CD4-positive, alpha-beta memory T cell (primary cell): ENCODE measurements at regions of chr4 and their contacts with region 1.

Region 1: DNA sequence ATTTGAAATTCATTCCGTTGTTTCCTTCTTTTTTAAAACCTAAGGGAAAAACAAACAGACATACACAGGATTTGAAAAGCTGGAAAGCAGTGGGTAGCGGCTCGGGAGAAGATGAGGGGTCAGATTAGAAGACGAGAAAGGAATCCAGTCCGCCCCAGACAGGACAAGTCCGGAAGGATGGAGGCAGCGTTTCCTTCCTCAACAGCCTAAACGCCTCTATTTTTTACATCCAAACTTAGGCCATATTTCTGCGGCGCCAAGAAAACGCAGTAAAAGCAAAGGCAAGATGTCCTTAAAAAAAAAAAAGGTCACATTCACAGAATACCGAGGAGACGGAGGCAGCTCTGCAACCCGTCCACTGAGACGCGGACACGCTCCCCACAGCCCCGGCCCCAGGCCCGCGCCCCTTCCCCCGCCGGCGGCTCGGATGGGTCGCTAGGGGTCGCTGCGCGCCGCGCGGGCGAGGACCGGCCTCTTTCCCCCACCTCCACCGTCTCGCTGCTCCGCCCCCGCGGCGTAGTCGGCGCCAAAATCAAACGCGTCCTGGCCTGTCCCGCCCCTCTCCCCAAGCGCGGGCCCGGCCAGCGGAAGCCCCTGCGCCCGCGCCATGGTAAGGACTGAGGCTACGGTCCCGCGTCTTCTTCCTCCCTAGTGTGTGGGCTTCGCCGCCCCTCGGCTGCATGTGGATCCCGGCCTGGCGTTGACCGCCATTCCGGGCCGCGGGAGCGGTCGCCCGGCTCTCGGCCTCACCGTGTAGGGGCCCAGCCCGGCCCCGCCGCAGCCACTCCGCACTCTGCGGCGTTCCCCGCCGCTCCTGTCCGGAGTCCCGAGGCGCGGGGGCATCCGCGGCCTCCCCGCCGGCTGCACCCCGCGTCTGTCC is at the start of gene MND1:
- DNase-seq: peak; percentile 87 to 89 (median 88)
- H3K4me3 ChIP-seq: peak within 1 kb of the TSS; percentile 86
- H3K4me3 Mint-ChIP-seq: peak within 1 kb of the TSS; percentile 90 to 98 (median 93)
- H3K27ac ChIP-seq: peak within 1 kb of the TSS; percentile 54
- H3K27ac Mint-ChIP-seq: peak within 1 kb of the TSS in 6 of 7 donors; percentile 7 to 86 (median 73)
- H3K4me1 ChIP-seq: peaks cover 11% of the 10 kb centered on the region
- H3K4me1 Mint-ChIP-seq: peaks cover 7 to 25% (median 18%) of the 10 kb centered on the region in 4 donors
- H3K27me3 ChIP-seq: no peaks in the 10 kb centered on the region
- H3K27me3 Mint-ChIP-seq: no peaks in the 10 kb centered on the region
- total RNA-seq, gene MND1: not detected

Region 2: DNA sequence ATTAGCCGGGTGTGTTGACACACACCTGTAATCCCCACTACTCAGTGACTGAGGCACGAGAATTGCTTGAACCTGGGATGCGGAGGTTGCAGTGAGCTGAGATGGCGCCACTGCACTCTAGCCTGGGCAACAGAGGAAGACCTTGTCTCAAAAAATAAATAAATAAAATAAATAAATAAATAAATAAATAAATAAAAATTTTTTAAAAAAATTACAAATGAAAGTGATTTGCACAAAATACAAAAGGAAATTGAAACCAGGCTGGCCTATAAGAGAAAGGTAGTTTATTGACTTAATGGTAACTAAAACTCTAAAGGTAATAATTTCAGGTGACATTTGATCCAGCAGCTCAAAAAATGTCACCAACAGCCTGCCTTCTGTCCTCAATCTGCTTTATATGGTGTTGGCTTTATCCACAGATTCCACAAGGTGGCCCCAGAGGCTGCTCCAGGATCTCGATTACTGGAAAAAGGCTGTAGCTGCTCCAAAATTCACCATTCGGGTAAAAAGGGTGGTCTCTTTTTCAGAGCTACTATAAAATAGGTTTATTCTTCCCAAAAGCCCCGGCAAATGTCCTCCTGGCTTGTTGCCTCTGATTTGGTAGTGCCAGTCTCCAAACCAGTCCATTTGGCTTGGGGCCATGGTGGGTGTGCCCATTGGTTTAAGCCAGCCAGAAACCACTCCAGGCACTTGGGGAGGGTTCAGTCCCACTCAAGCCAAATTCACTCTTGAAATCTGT is 201.5 kb before region 1 on chr4:
- CTCF ChIA-PET with region 1: interaction called, 8 read pairs
- POLR2A ChIA-PET with region 1: no interaction called
- intact Hi-C with region 1: loop called (anchors 1 kb)
- DNase-seq: peak; percentile 63 to 68 (median 64)
- H3K4me3 ChIP-seq: no peak overlapping the region
- H3K4me3 Mint-ChIP-seq: no peak overlapping the region
- H3K27ac ChIP-seq: no peak overlapping the region
- H3K27ac Mint-ChIP-seq: no peak overlapping the region
- H3K4me1 ChIP-seq: peaks cover 4% of the 10 kb centered on the region
- H3K4me1 Mint-ChIP-seq: peaks cover 0 to 12% (median 5%) of the 10 kb centered on the region in 4 donors
- H3K27me3 ChIP-seq: no peaks in the 10 kb centered on the region
- H3K27me3 Mint-ChIP-seq: no peaks in the 10 kb centered on the region

Region 3: DNA sequence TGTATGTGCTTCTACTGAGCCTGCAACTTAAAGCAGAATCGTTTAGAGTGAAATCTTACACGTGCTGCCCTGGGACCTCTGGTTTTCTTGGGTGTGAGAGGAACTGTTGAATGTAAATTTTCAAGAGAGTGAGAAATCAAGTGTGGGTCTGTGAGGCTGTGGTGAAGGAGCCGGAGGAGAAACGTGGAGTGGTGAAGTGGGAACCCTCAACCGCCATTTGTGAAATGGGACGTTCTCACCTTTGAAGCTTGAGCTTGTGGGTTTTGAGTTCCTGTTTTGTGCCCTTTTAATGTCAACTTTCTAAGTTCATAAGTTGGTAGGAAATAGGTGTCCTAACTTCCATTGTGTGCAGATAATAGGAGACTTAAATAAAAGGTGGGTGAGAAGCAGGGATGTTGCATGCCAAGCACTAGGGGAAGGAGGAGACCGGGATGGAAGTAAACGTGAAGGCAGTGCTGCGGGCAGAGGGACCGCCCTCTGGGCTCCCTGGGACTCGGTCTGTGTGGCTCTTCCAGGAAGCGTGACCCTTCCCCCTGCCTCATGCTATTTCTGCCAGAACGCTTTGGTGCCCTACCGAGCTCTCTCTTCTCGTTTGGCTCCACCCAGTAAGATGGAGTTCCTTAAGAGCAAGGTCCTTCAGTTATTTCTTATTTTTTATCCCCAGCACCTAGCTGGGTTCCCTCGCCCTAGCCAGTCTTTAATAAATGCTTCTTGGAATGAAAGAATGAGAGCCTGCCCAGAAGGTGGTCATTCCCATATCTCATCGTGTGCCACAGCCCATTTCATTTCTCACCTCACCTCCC is 177.8 kb after region 1 on chr4:
- CTCF ChIA-PET with region 1: interaction called, 3 read pairs
- POLR2A ChIA-PET with region 1: no interaction called
- intact Hi-C with region 1: loop called (anchors 2 kb)
- DNase-seq: peak; percentile 74 to 78 (median 75)
- H3K4me3 ChIP-seq: peak overlapping the region in 1 of 2 donors; percentile 41
- H3K4me3 Mint-ChIP-seq: peak overlapping the region; percentile 73 to 87 (median 84)
- H3K27ac ChIP-seq: peak overlapping the region; percentile 67
- H3K27ac Mint-ChIP-seq: peak overlapping the region; percentile 69 to 96 (median 92)
- H3K4me1 ChIP-seq: peaks cover 98% of the 10 kb centered on the region
- H3K4me1 Mint-ChIP-seq: peaks cover 78 to 97% (median 89%) of the 10 kb centered on the region in 4 donors
- H3K27me3 ChIP-seq: no peaks in the 10 kb centered on the region
- H3K27me3 Mint-ChIP-seq: no peaks in the 10 kb centered on the region

Region 4: DNA sequence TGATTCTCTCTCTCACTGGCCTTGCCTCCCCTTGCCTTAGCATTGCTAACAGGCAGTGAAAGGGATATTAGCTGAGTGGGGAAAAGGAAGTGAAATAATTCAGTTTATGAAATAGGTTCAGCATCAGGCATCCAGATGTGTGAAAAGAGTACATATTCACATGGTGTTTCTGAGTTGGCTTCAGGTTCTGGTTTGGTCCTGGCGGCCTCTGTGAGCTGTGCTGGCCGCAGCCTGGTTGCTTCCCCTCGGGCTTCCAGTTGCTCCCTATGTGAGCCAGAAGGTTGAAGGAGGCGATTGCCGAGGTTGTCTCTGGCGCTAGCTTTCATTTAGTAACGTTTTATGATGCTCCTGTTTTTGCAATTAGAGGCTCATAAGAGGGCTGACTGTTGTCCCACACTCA is 240.7 kb after region 1 on chr4:
- CTCF ChIA-PET with region 1: interaction called, 18 read pairs
- POLR2A ChIA-PET with region 1: interaction called, 3 read pairs
- intact Hi-C with region 1: no loop called
- DNase-seq: no peak
- H3K4me3 ChIP-seq: no peak overlapping the region
- H3K4me3 Mint-ChIP-seq: no peak overlapping the region
- H3K27ac ChIP-seq: no peak overlapping the region
- H3K27ac Mint-ChIP-seq: peak overlapping the region in 4 of 7 donors; percentile 18 to 90 (median 40)
- H3K4me1 ChIP-seq: no peaks in the 10 kb centered on the region
- H3K4me1 Mint-ChIP-seq: peaks cover 5 to 16% (median 12%) of the 10 kb centered on the region in 4 donors
- H3K27me3 ChIP-seq: no peaks in the 10 kb centered on the region
- H3K27me3 Mint-ChIP-seq: no peaks in the 10 kb centered on the region

Region 5: GRCh38 chr4:153643406-153644383 is 299.3 kb after region 1 on chr4:
- CTCF ChIA-PET with region 1: interaction called, 32 read pairs
- POLR2A ChIA-PET with region 1: interaction called, 5 read pairs
- intact Hi-C with region 1: loop called (anchors 1 kb)
- DNase-seq: peak in 4 of 5 donors; percentile 54 to 65 (median 62)
- H3K4me3 ChIP-seq: no peak overlapping the region
- H3K4me3 Mint-ChIP-seq: peak overlapping the region in 3 of 8 donors; percentile 8 to 62 (median 35)
- H3K27ac ChIP-seq: no peak overlapping the region
- H3K27ac Mint-ChIP-seq: peak overlapping the region in 3 of 7 donors; percentile 19 to 93 (median 46)
- H3K4me1 ChIP-seq: peaks cover 6% of the 10 kb centered on the region
- H3K4me1 Mint-ChIP-seq: peaks cover 7 to 15% (median 10%) of the 10 kb centered on the region in 4 donors
- H3K27me3 ChIP-seq: no peaks in the 10 kb centered on the region
- H3K27me3 Mint-ChIP-seq: no peaks in the 10 kb centered on the region

Region 6: DNA sequence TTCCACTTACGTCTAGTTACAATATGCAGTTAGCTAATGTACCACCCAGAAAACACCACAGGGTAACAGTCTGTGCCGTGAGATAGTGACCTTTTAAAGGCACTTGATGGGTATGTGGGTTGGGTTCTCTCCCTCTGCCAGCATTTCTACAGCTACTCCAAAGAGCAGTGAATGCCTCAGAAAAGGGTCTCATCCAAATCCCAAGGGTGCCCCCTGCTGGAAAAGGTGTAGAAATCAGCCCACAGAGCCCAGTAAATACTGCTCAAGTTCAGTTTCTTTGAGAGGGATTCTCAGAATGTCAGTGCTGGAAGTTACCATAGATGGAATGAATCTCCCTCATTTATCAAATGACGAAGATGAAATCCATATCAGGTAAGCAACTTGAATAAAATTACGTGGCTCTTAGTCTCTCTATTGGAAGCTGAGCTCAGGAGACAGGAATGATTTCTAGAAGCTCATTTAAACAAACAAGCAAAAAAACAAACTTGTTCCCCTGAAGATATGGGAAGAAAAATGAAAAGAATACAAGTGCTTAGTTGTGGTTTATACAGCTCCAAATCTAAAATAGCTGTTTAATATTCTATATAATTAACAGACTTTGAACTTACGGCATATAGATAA is 405.9 kb after region 1 on chr4:
- CTCF ChIA-PET with region 1: interaction called, 5 read pairs
- POLR2A ChIA-PET with region 1: no interaction called
- intact Hi-C with region 1: loop called (anchors 1 kb)
- DNase-seq: peak; percentile 54 to 63 (median 58)
- H3K4me3 ChIP-seq: no peak overlapping the region
- H3K4me3 Mint-ChIP-seq: no peak overlapping the region
- H3K27ac ChIP-seq: no peak overlapping the region
- H3K27ac Mint-ChIP-seq: no peak overlapping the region
- H3K4me1 ChIP-seq: peaks cover 3% of the 10 kb centered on the region
- H3K4me1 Mint-ChIP-seq: peaks cover 0 to 9% (median 2%) of the 10 kb centered on the region in 4 donors
- H3K27me3 ChIP-seq: no peaks in the 10 kb centered on the region
- H3K27me3 Mint-ChIP-seq: peaks cover 0 to 2% of the 10 kb centered on the region in 2 donors

Region 7: GRCh38 chr4:154626793-154627484 is 1282.6 kb after region 1 on chr4:
- CTCF ChIA-PET with region 1: no interaction called
- POLR2A ChIA-PET with region 1: no interaction called
- intact Hi-C with region 1: loop called (anchors 10 kb)
- DNase-seq: peak in 2 of 5 donors; percentile 12 to 17
- H3K4me3 ChIP-seq: no peak overlapping the region
- H3K4me3 Mint-ChIP-seq: peak overlapping the region in 1 of 8 donors; percentile 50
- H3K27ac ChIP-seq: no peak overlapping the region
- H3K27ac Mint-ChIP-seq: no peak overlapping the region
- H3K4me1 ChIP-seq: no peaks in the 10 kb centered on the region
- H3K4me1 Mint-ChIP-seq: peaks cover 0 to 2% (median 0%) of the 10 kb centered on the region in 4 donors
- H3K27me3 ChIP-seq: peaks cover 4% of the 10 kb centered on the region
- H3K27me3 Mint-ChIP-seq: peaks cover 9 to 22% of the 10 kb centered on the region in 2 donors